CD4-positive, alpha-beta memory T cell (primary cell): ENCODE measurements at regions of chr7 and their contacts with region 1.

Region 1: GRCh38 chr7:138752568-138753518 is 45.0 kb upstream of the TMEM213 start:
- DNase-seq: peak; percentile 93 to 99 (median 98)
- H3K4me3 ChIP-seq: peak overlapping the region in 1 of 2 donors; percentile 37
- H3K4me3 Mint-ChIP-seq: peak overlapping the region; percentile 28 to 78 (median 60)
- H3K27ac ChIP-seq: peak overlapping the region; percentile 60
- H3K27ac Mint-ChIP-seq: peak overlapping the region; percentile 91 to 98 (median 96)
- H3K4me1 ChIP-seq: peaks cover 36% of the 10 kb centered on the region
- H3K4me1 Mint-ChIP-seq: peaks cover 37 to 79% (median 49%) of the 10 kb centered on the region in 4 donors
- H3K27me3 ChIP-seq: no peaks in the 10 kb centered on the region
- H3K27me3 Mint-ChIP-seq: no peaks in the 10 kb centered on the region

Region 2: GRCh38 chr7:137895301-137896221 is 857.3 kb before region 1 on chr7:
- CTCF ChIA-PET with region 1: no interaction called
- POLR2A ChIA-PET with region 1: no interaction called
- intact Hi-C with region 1: no loop called
- DNase-seq: no peak
- H3K4me3 ChIP-seq: no peak overlapping the region
- H3K4me3 Mint-ChIP-seq: no peak overlapping the region
- H3K27ac ChIP-seq: no peak overlapping the region
- H3K27ac Mint-ChIP-seq: peak overlapping the region in 5 of 7 donors; percentile 16 to 66 (median 29)
- H3K4me1 ChIP-seq: peaks cover 5% of the 10 kb centered on the region
- H3K4me1 Mint-ChIP-seq: peaks cover 6 to 14% (median 10%) of the 10 kb centered on the region in 4 donors
- H3K27me3 ChIP-seq: no peaks in the 10 kb centered on the region
- H3K27me3 Mint-ChIP-seq: no peaks in the 10 kb centered on the region

Region 3: DNA sequence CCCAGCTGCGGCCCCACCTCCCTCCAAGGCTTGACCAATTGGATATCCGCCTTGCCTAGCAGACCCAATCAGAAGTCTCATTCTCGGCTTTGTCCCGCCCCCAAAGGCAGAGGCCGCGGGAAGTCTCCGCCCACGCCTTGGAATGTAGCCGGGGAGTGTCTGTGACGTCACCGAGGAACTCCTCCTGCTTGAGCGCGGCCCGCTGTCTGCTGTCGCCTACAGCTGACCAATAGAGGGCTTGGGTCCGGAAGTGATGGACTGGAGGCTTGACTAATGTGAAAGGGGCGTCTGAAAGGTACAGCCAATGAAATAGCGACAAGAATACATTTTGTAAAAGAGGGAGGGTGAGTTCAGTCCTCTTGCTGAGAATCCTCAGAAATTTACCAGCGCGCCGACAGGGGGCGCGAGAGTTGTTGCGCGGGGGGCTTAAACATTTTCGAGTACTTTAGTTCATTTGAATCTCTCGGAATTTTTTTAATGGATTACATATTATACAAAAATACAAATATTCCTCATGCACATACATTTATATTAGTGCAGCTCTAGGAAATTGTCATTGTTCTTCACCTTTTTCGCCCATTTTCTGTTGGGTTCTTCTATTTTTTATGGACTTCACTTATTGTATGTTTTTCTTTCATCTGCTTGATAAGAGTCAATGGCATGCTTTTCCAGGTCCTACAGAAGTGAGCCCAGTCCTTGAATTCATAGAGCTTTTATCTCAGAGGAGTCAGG is 750.6 kb before region 1 on chr7:
- CTCF ChIA-PET with region 1: no interaction called
- POLR2A ChIA-PET with region 1: no interaction called
- intact Hi-C with region 1: loop called (anchors 1 kb)
- DNase-seq: peak; percentile 98 to 99 (median 99)
- H3K4me3 ChIP-seq: peak overlapping the region; percentile 86 to 99
- H3K4me3 Mint-ChIP-seq: peak overlapping the region; percentile 93 to 98 (median 95)
- H3K27ac ChIP-seq: peak overlapping the region; percentile 87
- H3K27ac Mint-ChIP-seq: peak overlapping the region; percentile 81 to 98 (median 92)
- H3K4me1 ChIP-seq: peaks cover 37% of the 10 kb centered on the region
- H3K4me1 Mint-ChIP-seq: peaks cover 28 to 50% (median 35%) of the 10 kb centered on the region in 4 donors
- H3K27me3 ChIP-seq: no peaks in the 10 kb centered on the region
- H3K27me3 Mint-ChIP-seq: no peaks in the 10 kb centered on the region

Region 4: GRCh38 chr7:138388673-138389491 is 364.0 kb before region 1 on chr7:
- CTCF ChIA-PET with region 1: no interaction called
- POLR2A ChIA-PET with region 1: no interaction called
- intact Hi-C with region 1: no loop called
- DNase-seq: no peak
- H3K4me3 ChIP-seq: no peak overlapping the region
- H3K4me3 Mint-ChIP-seq: no peak overlapping the region
- H3K27ac ChIP-seq: no peak overlapping the region
- H3K27ac Mint-ChIP-seq: no peak overlapping the region
- H3K4me1 ChIP-seq: no peaks in the 10 kb centered on the region
- H3K4me1 Mint-ChIP-seq: no peaks in the 10 kb centered on the region
- H3K27me3 ChIP-seq: no peaks in the 10 kb centered on the region
- H3K27me3 Mint-ChIP-seq: no peaks in the 10 kb centered on the region

Region 5: GRCh38 chr7:138738551-138739335 is 14.1 kb before region 1 on chr7:
- CTCF ChIA-PET with region 1: interaction called, 49 read pairs
- POLR2A ChIA-PET with region 1: interaction called, 8 read pairs
- intact Hi-C with region 1: loop called (anchors 1 kb)
- DNase-seq: peak; percentile 74 to 81 (median 78)
- H3K4me3 ChIP-seq: no peak overlapping the region
- H3K4me3 Mint-ChIP-seq: no peak overlapping the region
- H3K27ac ChIP-seq: no peak overlapping the region
- H3K27ac Mint-ChIP-seq: peak overlapping the region in 5 of 7 donors; percentile 38 to 69 (median 45)
- H3K4me1 ChIP-seq: no peaks in the 10 kb centered on the region
- H3K4me1 Mint-ChIP-seq: peaks cover 2 to 6% (median 4%) of the 10 kb centered on the region in 4 donors
- H3K27me3 ChIP-seq: no peaks in the 10 kb centered on the region
- H3K27me3 Mint-ChIP-seq: peaks cover 0 to 1% of the 10 kb centered on the region in 2 donors

Region 6: DNA sequence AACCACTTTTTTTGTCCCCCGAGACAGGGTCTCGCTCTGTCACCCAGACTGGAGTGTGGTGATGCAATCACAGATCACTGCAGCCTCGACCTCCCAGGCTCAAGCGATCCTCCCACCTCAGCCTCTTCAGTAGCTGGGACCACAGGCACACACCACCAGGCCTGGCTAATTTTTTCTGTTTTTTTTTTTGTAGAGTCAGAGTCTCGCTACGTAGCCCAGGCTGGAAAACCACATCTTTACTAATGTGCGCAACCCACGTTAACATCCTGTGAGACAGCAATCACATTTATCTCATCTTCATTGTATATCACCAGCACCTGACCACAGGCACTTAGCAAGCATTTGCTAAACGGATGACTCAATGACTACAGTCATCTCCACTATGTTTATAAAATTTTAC is 123.0 kb after region 1 on chr7:
- CTCF ChIA-PET with region 1: interaction called, 3 read pairs
- POLR2A ChIA-PET with region 1: interaction called, 4 read pairs
- intact Hi-C with region 1: loop called (anchors 1 kb)
- DNase-seq: peak; percentile 76 to 85 (median 80)
- H3K4me3 ChIP-seq: no peak overlapping the region
- H3K4me3 Mint-ChIP-seq: peak overlapping the region in 3 of 8 donors; percentile 6 to 67 (median 17)
- H3K27ac ChIP-seq: no peak overlapping the region
- H3K27ac Mint-ChIP-seq: peak overlapping the region; percentile 62 to 93 (median 82)
- H3K4me1 ChIP-seq: peaks cover 16% of the 10 kb centered on the region
- H3K4me1 Mint-ChIP-seq: peaks cover 10 to 19% (median 14%) of the 10 kb centered on the region in 4 donors
- H3K27me3 ChIP-seq: no peaks in the 10 kb centered on the region
- H3K27me3 Mint-ChIP-seq: peaks cover 0 to 2% of the 10 kb centered on the region in 2 donors

Region 7: GRCh38 chr7:138981332-138982203 is 228.7 kb after region 1 on chr7 and contains the start of gene KIAA1549:
- CTCF ChIA-PET with region 1: no interaction called
- POLR2A ChIA-PET with region 1: no interaction called
- intact Hi-C with region 1: loop called (anchors 5 kb)
- DNase-seq: peak in 4 of 5 donors; percentile 29 to 41 (median 36)
- H3K4me3 ChIP-seq: peak within 1 kb of the TSS in 1 of 2 donors; percentile 43
- H3K4me3 Mint-ChIP-seq: peak within 1 kb of the TSS; percentile 86 to 90 (median 89)
- H3K27ac ChIP-seq: no peak within 1 kb of the TSS
- H3K27ac Mint-ChIP-seq: peak within 1 kb of the TSS in 6 of 7 donors; percentile 30 to 86 (median 62)
- H3K4me1 ChIP-seq: peaks cover 6% of the 10 kb centered on the region
- H3K4me1 Mint-ChIP-seq: peaks cover 9 to 26% (median 12%) of the 10 kb centered on the region in 4 donors
- H3K27me3 ChIP-seq: peaks cover 22% of the 10 kb centered on the region
- H3K27me3 Mint-ChIP-seq: peaks cover 29 to 36% of the 10 kb centered on the region in 2 donors
- total RNA-seq, gene KIAA1549: 0.06 to 0.11 TPM

Region 8: GRCh38 chr7:139230774-139231512 is 478.1 kb after region 1 on chr7 and contains the start of gene UBN2:
- CTCF ChIA-PET with region 1: no interaction called
- POLR2A ChIA-PET with region 1: no interaction called
- intact Hi-C with region 1: loop called (anchors 2 kb)
- DNase-seq: peak; percentile 79 to 90 (median 80)
- H3K4me3 ChIP-seq: peak within 1 kb of the TSS; percentile 79 to 96
- H3K4me3 Mint-ChIP-seq: peak within 1 kb of the TSS; percentile 98 to 100 (median 100)
- H3K27ac ChIP-seq: peak within 1 kb of the TSS; percentile 74
- H3K27ac Mint-ChIP-seq: peak within 1 kb of the TSS; percentile 96 to 100 (median 98)
- H3K4me1 ChIP-seq: peaks cover 19% of the 10 kb centered on the region
- H3K4me1 Mint-ChIP-seq: peaks cover 10 to 36% (median 24%) of the 10 kb centered on the region in 4 donors
- H3K27me3 ChIP-seq: no peaks in the 10 kb centered on the region
- H3K27me3 Mint-ChIP-seq: no peaks in the 10 kb centered on the region
- total RNA-seq, gene UBN2: 23.6 to 26.7 TPM